Right ventricle myocardium superior (tissue), 1 donor: ENCODE measurements at regions of chr11 and their contacts with region 1.

Region 1: DNA sequence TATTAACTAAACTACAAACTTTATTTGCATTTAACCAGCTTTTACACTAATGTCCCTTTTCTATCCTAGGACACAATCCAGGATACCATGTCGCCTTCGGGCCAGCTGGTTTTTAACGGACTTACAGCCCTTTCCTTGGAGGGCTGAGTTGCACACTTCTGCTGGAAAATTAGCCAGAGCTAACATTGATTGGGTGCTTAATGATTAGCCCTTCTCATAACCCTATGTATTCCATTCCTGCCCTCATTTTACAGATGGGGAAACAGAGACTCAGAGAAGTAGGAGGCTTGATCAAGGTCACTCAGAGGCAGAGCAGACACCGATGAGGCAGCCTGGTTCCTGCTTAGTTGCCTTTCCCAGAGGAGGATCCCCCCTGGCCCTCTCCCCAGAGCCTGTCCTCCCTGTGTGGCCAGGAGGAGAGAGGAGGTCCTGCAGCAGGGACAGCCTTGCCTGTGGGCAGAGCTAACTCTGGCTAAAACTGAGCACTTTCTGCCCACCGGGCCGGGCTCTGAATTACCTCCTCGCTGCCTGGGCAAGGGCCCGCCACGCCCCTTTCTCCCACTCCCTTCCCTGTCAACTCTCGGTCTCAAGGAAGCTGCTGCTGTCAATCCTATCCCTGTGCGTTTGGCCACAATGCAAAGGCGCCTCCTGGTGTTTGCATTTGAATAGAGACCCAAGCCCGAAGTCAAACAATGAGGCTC is 59.6 kb upstream of the PAX6 start:
- DNase-seq: no peak
- ATAC-seq: peak; percentile 75

Region 2: GRCh38 chr11:31107062-31107461 is 763.7 kb before region 1 on chr11:
- intact Hi-C with region 1: loop called (anchors 10 kb)
- DNase-seq: peak; percentile 64
- ATAC-seq: peak; percentile 74

Region 3: DNA sequence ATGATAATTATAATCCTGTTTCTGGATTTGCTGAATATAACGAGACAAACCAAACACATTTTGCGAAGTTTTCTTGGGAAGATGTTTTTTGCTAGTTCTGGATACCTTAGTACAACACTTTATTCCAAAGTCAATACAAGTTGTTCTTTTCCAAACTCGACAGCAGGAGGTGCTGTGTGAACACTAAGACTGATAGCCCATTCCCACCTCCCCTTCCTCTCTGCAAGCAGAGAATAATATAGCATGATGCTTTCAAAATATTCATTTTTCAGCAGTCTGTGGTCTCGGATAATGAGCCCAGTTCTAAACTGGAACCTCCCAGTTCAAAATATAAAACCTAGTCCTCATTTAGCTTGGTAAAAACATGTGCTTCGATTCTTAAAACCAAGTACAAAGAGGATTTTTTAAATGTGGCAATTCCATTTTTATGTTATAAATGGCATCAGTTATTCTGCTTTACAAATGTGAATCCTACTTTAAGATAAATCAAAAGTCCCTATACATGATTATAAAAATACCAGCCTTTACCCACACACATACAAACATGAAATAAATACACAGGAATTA is 630.3 kb before region 1 on chr11:
- intact Hi-C with region 1: loop called (anchors 10 kb)
- DNase-seq: no peak
- ATAC-seq: peak; percentile 53

Region 4: DNA sequence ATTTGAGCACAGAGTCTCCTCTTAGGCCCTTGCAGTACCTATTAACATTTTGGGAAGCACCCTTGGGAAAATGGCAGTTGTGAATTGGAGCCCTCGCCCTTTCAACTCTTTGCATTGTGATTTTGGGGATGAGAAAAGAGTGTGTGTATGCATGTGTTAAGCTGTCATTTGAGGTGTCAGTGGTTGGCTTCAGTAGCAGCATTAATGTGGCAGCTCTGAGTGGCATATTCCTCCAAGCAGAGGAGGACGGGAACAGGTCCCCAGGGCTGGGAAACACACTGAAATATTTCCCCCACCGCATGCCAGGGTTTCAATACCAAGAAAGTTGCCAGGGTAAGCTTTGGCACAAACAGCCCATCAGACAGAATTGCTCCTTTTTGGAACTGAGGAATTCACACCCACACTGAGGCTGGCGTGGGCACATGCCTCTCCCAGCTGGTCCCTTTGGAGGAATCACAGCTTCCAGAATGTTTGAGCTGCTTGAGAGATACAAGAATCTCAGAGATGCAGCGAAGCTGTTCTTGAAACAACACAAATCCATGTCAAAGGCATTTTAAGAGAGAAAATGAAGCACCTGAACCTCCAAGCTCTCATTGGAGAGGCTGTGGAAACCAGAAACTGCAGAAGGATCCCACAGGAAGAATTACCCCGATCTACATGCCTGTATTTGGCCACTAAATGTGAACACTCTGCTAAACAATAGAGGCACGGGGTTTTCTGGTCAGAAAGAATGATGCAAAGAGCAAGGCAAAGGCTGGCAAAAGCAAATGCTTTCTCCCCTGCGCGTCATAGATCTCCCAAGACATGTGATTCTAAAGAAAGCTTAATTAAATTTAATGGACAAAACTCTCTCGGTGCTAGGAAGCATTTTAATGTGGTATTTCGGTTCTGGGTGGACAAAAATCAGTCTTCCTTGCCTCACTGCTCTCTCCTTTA is 152.9 kb after region 1 on chr11:
- intact Hi-C with region 1: no loop called
- DNase-seq: no peak
- ATAC-seq: no peak